GM12878 (cell line): ENCODE measurements at regions of chr10 and their contacts with region 1.

Region 1: DNA sequence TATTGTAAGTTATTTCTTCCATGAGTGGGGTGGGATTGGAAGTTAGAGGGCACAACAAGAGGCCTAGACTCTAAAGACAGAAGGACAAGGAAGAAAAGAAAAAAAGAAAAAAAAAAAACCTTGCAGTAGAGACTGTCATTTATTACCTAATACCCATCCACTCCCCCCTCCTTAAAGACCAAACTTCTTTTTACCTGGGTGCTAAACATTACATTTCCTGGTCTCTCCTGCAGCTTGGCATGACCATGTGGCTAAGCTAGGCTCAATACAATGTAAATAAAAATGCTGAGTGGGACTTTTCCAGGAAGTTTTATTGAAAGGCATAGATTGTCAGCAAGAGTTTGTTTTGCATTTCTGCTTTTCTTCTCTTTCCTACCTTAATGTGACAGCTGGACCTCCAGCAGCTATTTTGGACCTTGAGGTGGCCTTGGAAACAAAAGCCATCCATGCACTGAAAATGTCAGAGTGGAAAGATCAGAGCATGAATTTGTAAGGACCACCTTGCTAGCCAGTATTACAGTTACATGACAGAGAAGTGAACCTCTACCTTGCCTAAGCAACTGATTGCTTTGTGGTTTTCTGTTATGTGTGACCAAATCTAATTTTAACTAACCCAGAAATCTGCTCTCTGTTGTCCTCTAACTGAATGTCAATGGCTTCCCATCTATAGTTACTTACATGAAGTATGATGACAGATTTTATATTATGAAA is 81.3 kb upstream of the SFMBT2 start:
- DNase-seq: peak; percentile 74
- ATAC-seq: peak; percentile 91
- H3K4me3 ChIP-seq: peak overlapping the region; percentile 41; the same call in 1 of the 2 replicates
- H3K27ac ChIP-seq: peak overlapping the region; percentile 80
- H3K4me1 ChIP-seq: peaks cover 37% of the 10 kb centered on the region
- H3K27me3 ChIP-seq: no peaks in the 10 kb centered on the region
- CTCF ChIP-seq: no peak
- EP300 ChIP-seq: 0 out of 4 replicates have a peak, but pooled peaks of 1 of the 2 experiments have one; percentile 57
- POLR2A ChIP-seq: no peak
- RAD21 ChIP-seq: no peak

Region 2: GRCh38 chr10:7507887-7508726 is 16.0 kb after region 1 on chr10:
- CTCF ChIA-PET with region 1: interaction called, 7 read pairs
- POLR2A ChIA-PET with region 1: interaction called, 5 read pairs
- RAD21 ChIA-PET with region 1: interaction called, 12 read pairs
- SMC1A ChIA-PET with region 1: interaction called, 29 read pairs
- in situ Hi-C with region 1: no loop called
- intact Hi-C with region 1: no loop called
- DNase-seq: no peak
- ATAC-seq: no peak
- H3K4me3 ChIP-seq: no peak overlapping the region
- H3K27ac ChIP-seq: peak overlapping the region; percentile 58
- H3K4me1 ChIP-seq: peaks cover 12% of the 10 kb centered on the region
- H3K27me3 ChIP-seq: no peaks in the 10 kb centered on the region
- CTCF ChIP-seq: no peak
- EP300 ChIP-seq: no peak
- POLR2A ChIP-seq: no peak
- RAD21 ChIP-seq: no peak